IMR-90 (cell line): ENCODE measurements at regions of chr3 and their contacts with region 1.

Region 1: DNA sequence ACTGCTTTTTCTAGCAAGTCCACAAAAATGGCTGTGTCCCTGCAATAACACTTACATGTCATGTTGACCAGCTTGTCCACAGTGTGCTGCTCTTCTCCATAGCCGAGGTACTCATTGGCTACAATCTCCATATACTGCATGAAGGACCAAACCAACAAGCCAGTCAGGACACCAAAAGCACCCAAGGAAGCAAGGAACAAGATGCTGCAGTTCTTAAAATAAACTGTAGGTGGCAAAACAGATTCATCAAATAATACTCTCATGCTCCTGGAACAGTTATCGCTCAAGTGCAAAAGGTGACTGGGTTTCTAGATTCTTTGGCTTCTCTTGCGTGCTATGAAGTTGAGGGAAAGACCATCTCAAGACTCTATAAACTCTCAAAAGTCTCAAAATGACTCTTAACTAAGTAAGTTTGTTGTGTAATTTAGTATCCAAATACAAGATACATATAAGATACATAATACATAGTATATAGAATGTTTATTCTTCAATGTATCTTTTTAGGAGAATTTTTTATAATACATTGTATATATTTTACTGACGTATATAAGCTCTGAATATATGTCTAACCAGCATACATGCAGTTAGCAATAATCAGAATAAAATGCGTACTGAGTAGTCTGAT is 57.0 kb downstream of the NEK10 start:
- DNase-seq: peak; percentile 79
- ATAC-seq: peak; percentile 79
- H3K4me3 ChIP-seq: no peak overlapping the region
- H3K27ac ChIP-seq: no peak overlapping the region; the same call in 1 of the 2 replicates
- H3K4me1 ChIP-seq: peaks cover 3% of the 10 kb centered on the region; the same call in 1 of the 2 replicates
- H3K27me3 ChIP-seq: no peaks in the 10 kb centered on the region
- CTCF ChIP-seq: peak; percentile 71
- POLR2A ChIP-seq: no peak
- RAD21 ChIP-seq: peak; percentile 74

Region 2: GRCh38 chr3:27326629-27327545 is 14.7 kb after region 1 on chr3:
- CTCF ChIA-PET with region 1: no interaction called
- POLR2A ChIA-PET with region 1: no interaction called
- dilution Hi-C with region 1: no loop called
- in situ Hi-C with region 1: no loop called
- intact Hi-C with region 1: loop called (anchors 1 kb)
- DNase-seq: peak; percentile 98
- ATAC-seq: peak; percentile 95
- H3K4me3 ChIP-seq: no peak overlapping the region
- H3K27ac ChIP-seq: peak overlapping the region; percentile 68; the same call in 1 of the 2 replicates
- H3K4me1 ChIP-seq: peaks cover 22% of the 10 kb centered on the region
- H3K27me3 ChIP-seq: no peaks in the 10 kb centered on the region
- CTCF ChIP-seq: no peak
- POLR2A ChIP-seq: no peak
- RAD21 ChIP-seq: no peak

Region 3: GRCh38 chr3:27357665-27358258 is 45.6 kb after region 1 on chr3:
- CTCF ChIA-PET with region 1: no interaction called
- POLR2A ChIA-PET with region 1: no interaction called
- dilution Hi-C with region 1: no loop called
- in situ Hi-C with region 1: no loop called
- intact Hi-C with region 1: loop called (anchors 5 kb)
- DNase-seq: peak; percentile 56
- ATAC-seq: peak; percentile 66
- H3K4me3 ChIP-seq: no peak overlapping the region
- H3K27ac ChIP-seq: no peak overlapping the region
- H3K4me1 ChIP-seq: peaks cover 4% of the 10 kb centered on the region; the same call in 1 of the 2 replicates
- H3K27me3 ChIP-seq: no peaks in the 10 kb centered on the region
- CTCF ChIP-seq: peak; percentile 57
- POLR2A ChIP-seq: no peak
- RAD21 ChIP-seq: peak; percentile 52

Region 4: GRCh38 chr3:27467545-27467944 is 155.4 kb after region 1 on chr3:
- CTCF ChIA-PET with region 1: interaction called, 3 read pairs
- POLR2A ChIA-PET with region 1: no interaction called
- dilution Hi-C with region 1: no loop called
- in situ Hi-C with region 1: no loop called
- intact Hi-C with region 1: loop called (anchors 2 kb)
- DNase-seq: peak; percentile 61
- ATAC-seq: peak; percentile 78
- H3K4me3 ChIP-seq: no peak overlapping the region
- H3K27ac ChIP-seq: no peak overlapping the region
- H3K4me1 ChIP-seq: peaks cover 6% of the 10 kb centered on the region
- H3K27me3 ChIP-seq: no peaks in the 10 kb centered on the region
- CTCF ChIP-seq: peak; percentile 62
- POLR2A ChIP-seq: no peak
- RAD21 ChIP-seq: peak; percentile 52

Region 5: GRCh38 chr3:27681245-27681748 is 369.1 kb after region 1 on chr3:
- CTCF ChIA-PET with region 1: interaction called, 4 read pairs
- POLR2A ChIA-PET with region 1: no interaction called
- dilution Hi-C with region 1: no loop called
- in situ Hi-C with region 1: loop called (anchors 10 kb)
- intact Hi-C with region 1: loop called (anchors 2 kb)
- DNase-seq: peak; percentile 83
- ATAC-seq: peak; percentile 52
- H3K4me3 ChIP-seq: peak overlapping the region; percentile 28; the same call in 1 of the 2 replicates
- H3K27ac ChIP-seq: peak overlapping the region; percentile 55; the same call in 1 of the 2 replicates
- H3K4me1 ChIP-seq: peaks cover 10% of the 10 kb centered on the region
- H3K27me3 ChIP-seq: no peaks in the 10 kb centered on the region
- CTCF ChIP-seq: peak; percentile 81
- POLR2A ChIP-seq: no peak
- RAD21 ChIP-seq: peak; percentile 72

Region 6: GRCh38 chr3:28022916-28023315 is 710.8 kb after region 1 on chr3:
- CTCF ChIA-PET with region 1: no interaction called
- POLR2A ChIA-PET with region 1: no interaction called
- dilution Hi-C with region 1: no loop called
- in situ Hi-C with region 1: no loop called
- intact Hi-C with region 1: no loop called
- DNase-seq: no peak
- ATAC-seq: no peak
- H3K4me3 ChIP-seq: no peak overlapping the region
- H3K27ac ChIP-seq: no peak overlapping the region
- H3K4me1 ChIP-seq: no peaks in the 10 kb centered on the region
- H3K27me3 ChIP-seq: no peaks in the 10 kb centered on the region
- CTCF ChIP-seq: no peak
- POLR2A ChIP-seq: no peak
- RAD21 ChIP-seq: no peak